ENCODE measurements at regions of chr20 and their contacts with region 1.

Region 1: GRCh38 chr20:13121840-13122515 is 99.1 kb upstream of the ISM1 start:
- DNase-seq: no peak
- H3K4me3 ChIP-seq: no peak overlapping the region
- H3K27ac ChIP-seq: no peak overlapping the region
- H3K4me1 ChIP-seq: no peaks in the 10 kb centered on the region
- H3K27me3 ChIP-seq: no peaks in the 10 kb centered on the region
- CTCF ChIP-seq: no peak
- POLR2A ChIP-seq: no peak

Region 2: GRCh38 chr20:13546497-13547131 is 424.6 kb after region 1 on chr20:
- intact Hi-C with region 1: loop called (anchors 10 kb)
- DNase-seq: peak; percentile 69 to 71
- H3K4me3 ChIP-seq: no peak overlapping the region
- H3K27ac ChIP-seq: no peak overlapping the region
- H3K4me1 ChIP-seq: no peaks in the 10 kb centered on the region
- H3K27me3 ChIP-seq: no peaks in the 10 kb centered on the region
- CTCF ChIP-seq: peak; percentile 62 to 68 (median 66)
- POLR2A ChIP-seq: no peak